IMR-90 (cell line): ENCODE measurements at regions of chr11 and their contacts with region 1.

Region 1: GRCh38 chr11:129143335-129143734 is 48.8 kb downstream of the ARHGAP32 start:
- DNase-seq: peak; percentile 99
- ATAC-seq: peak; percentile 99
- H3K4me3 ChIP-seq: no peak overlapping the region
- H3K27ac ChIP-seq: no peak overlapping the region
- H3K4me1 ChIP-seq: no peaks in the 10 kb centered on the region
- H3K27me3 ChIP-seq: no peaks in the 10 kb centered on the region
- CTCF ChIP-seq: no peak
- POLR2A ChIP-seq: no peak
- RAD21 ChIP-seq: no peak

Region 2: GRCh38 chr11:129279326-129280026 is 136.1 kb after region 1 on chr11:
- CTCF ChIA-PET with region 1: interaction called, 4 read pairs
- POLR2A ChIA-PET with region 1: no interaction called
- dilution Hi-C with region 1: no loop called
- in situ Hi-C with region 1: no loop called
- intact Hi-C with region 1: loop called (anchors 5 kb)
- DNase-seq: peak; percentile 67
- ATAC-seq: peak; percentile 90
- H3K4me3 ChIP-seq: peak overlapping the region; percentile 82
- H3K27ac ChIP-seq: peak overlapping the region; percentile 38; the same call in 1 of the 2 replicates
- H3K4me1 ChIP-seq: peaks cover 2% of the 10 kb centered on the region; the same call in 1 of the 2 replicates
- H3K27me3 ChIP-seq: no peaks in the 10 kb centered on the region
- CTCF ChIP-seq: 0 out of 2 replicates have a peak, but pooled peaks have one; percentile 15
- POLR2A ChIP-seq: no peak
- RAD21 ChIP-seq: no peak